ENCODE measurements at regions of chr7 and their contacts with region 1.

Region 1: DNA sequence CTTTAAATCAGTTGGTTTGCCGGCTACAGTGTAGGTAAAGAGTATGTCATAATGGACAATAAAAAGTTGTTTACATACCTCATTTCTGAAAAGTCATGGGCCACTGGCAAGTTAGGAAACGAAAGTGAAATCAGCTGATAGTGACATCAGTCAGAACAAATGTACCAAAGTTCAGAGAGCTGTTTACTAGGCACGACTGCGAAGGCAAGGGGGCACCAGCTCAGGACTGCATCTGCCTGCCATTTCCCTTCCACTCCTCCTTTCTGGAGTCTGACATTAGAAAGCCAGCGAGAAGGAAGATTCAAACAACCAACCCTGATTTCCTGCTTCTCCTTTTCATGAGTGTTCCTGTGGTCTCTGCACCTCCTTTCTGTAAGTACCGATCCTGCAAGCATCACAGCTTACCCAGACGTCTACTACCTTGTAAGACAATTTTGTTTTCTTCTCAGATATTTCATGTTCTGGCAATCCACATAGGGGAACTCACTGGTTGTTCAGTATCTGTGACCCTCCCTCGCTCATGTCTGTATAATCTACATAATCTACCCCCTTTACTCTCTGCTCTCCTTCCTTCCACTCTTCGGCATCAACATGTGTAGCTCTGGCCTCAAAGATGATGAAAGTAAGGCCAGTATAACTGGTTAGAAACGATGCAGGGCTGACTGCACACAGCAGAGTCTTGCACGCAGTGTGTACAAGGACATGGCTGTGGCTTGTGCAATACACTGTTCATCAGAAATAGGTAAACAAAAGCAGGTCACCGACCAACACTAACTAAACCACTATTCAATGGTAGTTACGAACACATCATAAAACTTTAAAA is at the start of gene TMEM140:
- DNase-seq: peak; percentile 74
- ATAC-seq: peak; percentile 81
- H3K4me3 Mint-ChIP-seq: peak within 1 kb of the TSS; percentile 80
- H3K27ac Mint-ChIP-seq: peak within 1 kb of the TSS; percentile 90
- H3K4me1 Mint-ChIP-seq: peaks cover 63% of the 10 kb centered on the region
- H3K27me3 Mint-ChIP-seq: no peaks in the 10 kb centered on the region
- CTCF ChIP-seq: no peak
- total RNA-seq, gene TMEM140: 6.2 to 7.6 TPM

Region 2: DNA sequence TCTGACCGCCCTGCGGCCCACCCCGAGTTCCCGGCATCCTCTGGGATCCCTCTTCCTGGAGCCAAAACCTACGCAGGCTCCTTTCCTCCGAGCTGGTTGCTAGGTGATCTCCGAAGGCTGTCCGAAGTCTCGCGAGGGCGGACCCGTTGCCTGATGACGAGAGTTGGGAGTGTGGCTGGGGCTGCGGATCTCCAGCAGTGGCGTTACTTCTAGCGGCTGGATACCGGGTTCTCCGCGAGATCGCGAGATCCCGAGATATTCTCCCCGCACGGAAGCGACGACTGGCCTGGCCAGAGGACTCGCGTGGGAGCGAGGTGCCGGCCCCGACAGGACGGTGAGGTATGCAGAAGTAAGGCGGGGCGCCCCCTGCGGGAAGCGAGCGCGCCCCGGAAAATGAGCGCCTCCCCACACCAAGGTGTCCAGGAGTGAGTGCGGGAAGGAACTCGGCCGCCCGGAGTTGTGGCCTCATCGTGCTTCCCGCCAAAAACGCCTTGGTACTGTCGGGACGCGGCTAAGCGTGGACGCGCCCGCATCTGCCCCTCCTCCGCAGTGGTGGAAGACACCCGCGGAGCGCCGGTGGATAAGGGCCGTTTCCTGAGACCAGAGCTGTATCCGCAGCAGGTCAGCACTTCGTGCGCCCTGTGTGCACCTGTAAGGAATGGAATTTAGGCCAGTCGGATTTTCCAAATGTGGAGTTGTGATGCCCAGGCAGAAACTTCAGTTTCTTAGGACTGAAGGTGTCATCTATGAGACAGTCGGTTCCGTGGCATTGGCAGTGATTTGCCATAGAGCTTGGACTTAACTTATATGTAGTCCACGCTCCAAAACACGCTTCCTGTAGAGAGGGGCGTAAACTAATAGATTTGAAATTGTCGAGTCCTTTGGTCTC is 161.5 kb before region 1 on chr7 and contains the start of gene AGBL3:
- CTCF ChIA-PET with region 1: interaction called, 21 read pairs
- POLR2A ChIA-PET with region 1: interaction called, 6 read pairs
- intact Hi-C with region 1: loop called (anchors 5 kb)
- DNase-seq: peak; percentile 97
- ATAC-seq: peak; percentile 93
- H3K4me3 Mint-ChIP-seq: peak within 1 kb of the TSS; percentile 97
- H3K27ac Mint-ChIP-seq: peak within 1 kb of the TSS; percentile 98
- H3K4me1 Mint-ChIP-seq: peaks cover 38% of the 10 kb centered on the region
- H3K27me3 Mint-ChIP-seq: no peaks in the 10 kb centered on the region
- CTCF ChIP-seq: peak; percentile 76
- total RNA-seq, gene AGBL3: 2.7 to 2.9 TPM

Region 3: DNA sequence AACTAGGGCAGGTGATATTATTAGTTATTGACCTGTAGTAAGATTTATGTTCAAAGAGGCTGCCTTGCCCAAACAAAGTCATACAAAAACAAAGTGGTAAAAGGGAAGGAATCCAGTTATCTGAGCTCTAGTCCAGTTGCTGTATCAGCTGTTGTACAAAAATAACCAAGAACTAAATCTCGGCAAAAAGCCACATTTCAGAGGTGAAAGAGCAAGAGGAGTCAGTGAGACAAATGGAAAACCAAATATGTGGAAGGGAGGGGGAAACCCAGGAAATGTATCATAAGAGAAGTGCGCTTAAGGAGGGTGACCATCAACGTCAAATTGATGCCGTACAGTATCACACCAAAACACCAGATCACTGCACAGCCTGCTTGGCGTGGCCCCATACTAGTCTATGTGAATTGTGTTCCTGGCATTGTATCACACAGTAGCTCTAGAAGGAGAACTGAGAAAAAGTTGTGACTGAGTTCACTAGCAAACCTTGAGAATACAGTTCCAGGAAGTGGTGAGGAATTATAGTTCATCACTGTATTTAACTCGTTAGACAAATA is 155.4 kb before region 1 on chr7:
- CTCF ChIA-PET with region 1: interaction called, 21 read pairs
- POLR2A ChIA-PET with region 1: interaction called, 22 read pairs
- intact Hi-C with region 1: loop called (anchors 5 kb)
- DNase-seq: peak; percentile 70
- ATAC-seq: peak; percentile 79
- H3K4me3 Mint-ChIP-seq: peak overlapping the region; percentile 51
- H3K27ac Mint-ChIP-seq: peak overlapping the region; percentile 90
- H3K4me1 Mint-ChIP-seq: peaks cover 78% of the 10 kb centered on the region
- H3K27me3 Mint-ChIP-seq: no peaks in the 10 kb centered on the region
- CTCF ChIP-seq: no peak

Region 4: DNA sequence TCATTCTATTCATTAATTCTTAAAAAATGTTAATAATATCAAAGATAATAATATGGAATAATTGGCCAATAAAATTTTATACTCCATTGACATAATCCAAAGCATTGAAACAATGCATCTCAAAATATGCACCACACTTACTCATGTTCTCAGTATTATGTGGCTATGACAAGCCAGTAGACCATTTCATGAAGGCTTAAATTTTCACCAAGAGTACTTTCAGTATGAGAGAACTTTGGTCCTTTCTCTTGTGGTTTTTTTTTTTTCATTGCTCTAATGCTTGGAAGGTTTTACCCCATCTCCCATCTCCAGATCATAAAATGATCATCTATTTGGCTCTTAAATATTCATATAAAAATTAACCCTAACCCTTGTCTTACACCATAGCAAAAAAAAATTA is 45.7 kb before region 1 on chr7:
- CTCF ChIA-PET with region 1: no interaction called
- POLR2A ChIA-PET with region 1: no interaction called
- intact Hi-C with region 1: no loop called
- DNase-seq: no peak
- ATAC-seq: peak; percentile 60
- H3K4me3 Mint-ChIP-seq: no peak overlapping the region
- H3K27ac Mint-ChIP-seq: no peak overlapping the region
- H3K4me1 Mint-ChIP-seq: peaks cover 2% of the 10 kb centered on the region
- H3K27me3 Mint-ChIP-seq: no peaks in the 10 kb centered on the region
- CTCF ChIP-seq: no peak

Region 5: DNA sequence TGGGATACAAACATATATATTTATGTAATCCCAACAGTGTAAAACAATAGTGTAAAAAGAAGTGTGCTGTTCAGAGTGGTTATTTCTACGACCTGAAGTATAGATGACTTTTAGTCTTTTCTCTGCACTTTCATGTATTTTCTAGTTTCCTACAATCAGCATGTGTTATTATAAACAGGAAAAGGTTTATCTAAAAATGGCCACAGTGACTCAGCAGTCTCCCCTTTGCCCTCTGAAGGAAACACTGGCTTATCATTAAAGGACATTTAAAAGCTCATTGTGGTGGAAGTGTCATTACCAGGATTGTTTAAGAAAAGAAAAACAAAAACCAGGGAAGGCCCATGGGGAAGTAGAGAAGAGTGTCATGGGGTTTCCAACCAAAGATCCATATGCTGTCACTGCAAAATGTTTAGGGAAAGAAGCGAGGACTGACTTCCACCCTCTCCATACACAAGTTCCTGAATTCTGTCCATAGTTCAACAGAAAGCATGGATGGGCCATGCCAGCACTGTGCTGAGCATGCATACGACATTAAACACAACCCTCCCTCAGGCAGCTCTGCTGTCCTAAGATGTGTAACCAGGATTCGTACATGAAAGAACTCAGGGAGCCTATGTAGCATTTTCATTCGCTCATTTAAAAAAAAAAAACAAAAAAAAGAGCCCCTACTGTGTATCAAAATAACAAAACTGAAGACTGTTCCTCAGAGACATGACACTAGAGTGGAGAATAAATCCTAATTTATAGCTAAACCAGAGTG is 12.2 kb after region 1 on chr7:
- CTCF ChIA-PET with region 1: interaction called, 11 read pairs
- POLR2A ChIA-PET with region 1: interaction called, 204 read pairs
- intact Hi-C with region 1: no loop called
- DNase-seq: no peak
- ATAC-seq: peak; percentile 62
- H3K4me3 Mint-ChIP-seq: no peak overlapping the region
- H3K27ac Mint-ChIP-seq: peak overlapping the region; percentile 85
- H3K4me1 Mint-ChIP-seq: peaks cover 47% of the 10 kb centered on the region
- H3K27me3 Mint-ChIP-seq: no peaks in the 10 kb centered on the region
- CTCF ChIP-seq: no peak

Measured in activated CD8-positive, alpha-beta T cell treated with anti-CD3 and anti-CD28 coated beads for 36 hours (primary cell).